GM12878 (cell line): ENCODE measurements at regions of chr4 and their contacts with region 1.

Region 1: DNA sequence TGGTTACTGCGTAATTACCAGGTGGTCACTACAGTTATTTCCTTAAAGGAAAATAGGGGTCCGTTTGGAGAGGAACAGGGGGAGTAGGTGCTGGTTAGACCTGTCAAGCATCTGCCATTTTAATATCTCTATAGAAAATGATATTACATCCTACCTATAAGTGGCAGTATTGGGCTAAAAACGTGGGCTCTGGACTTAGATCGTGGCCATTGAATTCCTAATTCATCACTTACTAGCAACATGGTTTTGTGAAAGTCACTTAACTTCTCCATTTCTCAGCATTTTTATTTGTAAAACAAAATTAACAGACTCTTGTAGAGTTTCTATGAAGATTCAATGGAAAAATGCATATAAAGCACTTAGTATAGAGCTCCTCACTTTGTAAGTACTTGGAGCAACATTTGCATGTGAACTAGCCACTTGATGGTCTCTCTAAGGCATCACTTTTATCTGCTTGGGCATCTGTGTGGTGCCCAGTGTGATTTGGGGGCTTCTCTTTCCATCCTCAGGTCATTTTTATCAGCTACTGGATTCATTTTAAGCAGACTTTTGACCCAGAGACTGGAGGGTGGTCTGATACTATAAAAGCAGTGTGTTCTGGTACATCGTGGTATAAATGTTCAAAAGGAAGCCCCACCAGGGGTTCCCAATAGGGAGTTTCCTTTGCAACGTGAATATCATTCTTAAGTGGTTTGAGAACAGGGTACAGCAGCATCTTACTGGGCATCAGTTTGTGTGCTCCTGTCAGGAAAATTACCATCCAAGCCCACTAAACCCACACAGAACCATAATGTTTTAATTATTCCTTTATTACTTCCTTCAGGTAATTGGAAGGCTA is 42.7 kb upstream of the RASSF6 start:
- DNase-seq: no peak
- ATAC-seq: peak; percentile 91
- H3K4me3 ChIP-seq: no peak overlapping the region
- H3K27ac ChIP-seq: no peak overlapping the region
- H3K4me1 ChIP-seq: no peaks in the 10 kb centered on the region
- H3K27me3 ChIP-seq: no peaks in the 10 kb centered on the region; a peak in 1 of 4 replicates
- CTCF ChIP-seq: peak; percentile 27 to 66 (median 48); a peak in 5 of 6 replicates
- EP300 ChIP-seq: no peak
- POLR2A ChIP-seq: no peak
- RAD21 ChIP-seq: peak; percentile 55

Region 2: DNA sequence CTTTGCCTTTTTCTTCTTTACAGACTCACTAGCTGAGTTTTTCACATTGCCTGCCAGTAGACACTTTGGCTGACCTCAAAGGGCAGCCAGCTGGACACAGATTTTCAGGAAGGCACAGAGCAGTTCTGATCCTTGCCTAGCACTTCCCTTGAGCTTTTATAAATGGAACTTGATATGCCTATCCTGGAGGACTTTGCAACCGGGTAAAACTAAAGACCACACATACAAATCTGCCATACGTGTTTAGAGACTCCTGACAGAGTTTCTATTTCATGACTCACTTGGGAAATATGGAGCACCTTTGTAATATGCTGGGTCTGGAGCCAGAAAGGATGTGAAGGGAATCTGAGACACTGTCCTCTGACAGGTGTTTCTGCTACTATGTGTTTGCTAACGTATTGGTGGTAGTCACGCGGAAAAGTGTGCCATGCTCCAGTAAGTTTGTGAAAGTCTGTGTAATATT is 14.0 kb after region 1 on chr4:
- CTCF ChIA-PET with region 1: interaction called, 43 read pairs
- POLR2A ChIA-PET with region 1: no interaction called
- RAD21 ChIA-PET with region 1: interaction called, 3 read pairs
- SMC1A ChIA-PET with region 1: interaction called, 9 read pairs
- in situ Hi-C with region 1: no loop called
- intact Hi-C with region 1: no loop called
- DNase-seq: peak; percentile 19
- ATAC-seq: peak; percentile 81
- H3K4me3 ChIP-seq: no peak overlapping the region
- H3K27ac ChIP-seq: no peak overlapping the region
- H3K4me1 ChIP-seq: no peaks in the 10 kb centered on the region
- H3K27me3 ChIP-seq: no peaks in the 10 kb centered on the region
- CTCF ChIP-seq: no peak
- EP300 ChIP-seq: no peak
- POLR2A ChIP-seq: no peak
- RAD21 ChIP-seq: no peak

Region 3: GRCh38 chr4:73864365-73864764 is 201.4 kb after region 1 on chr4:
- CTCF ChIA-PET with region 1: interaction called, 71 read pairs
- POLR2A ChIA-PET with region 1: no interaction called
- RAD21 ChIA-PET with region 1: interaction called, 17 read pairs
- SMC1A ChIA-PET with region 1: interaction called, 18 read pairs
- in situ Hi-C with region 1: no loop called
- intact Hi-C with region 1: loop called (anchors 1 kb)
- DNase-seq: no peak
- ATAC-seq: peak; percentile 62
- H3K4me3 ChIP-seq: no peak overlapping the region
- H3K27ac ChIP-seq: no peak overlapping the region
- H3K4me1 ChIP-seq: no peaks in the 10 kb centered on the region
- H3K27me3 ChIP-seq: peaks cover 0 to 6% of the 10 kb centered on the region in 2 experiments; a peak in 1 of 4 replicates
- CTCF ChIP-seq: peak; percentile 46 to 66 (median 57)
- EP300 ChIP-seq: no peak
- POLR2A ChIP-seq: no peak
- RAD21 ChIP-seq: peak; percentile 40; the same call in 1 of the 2 replicates

Region 4: DNA sequence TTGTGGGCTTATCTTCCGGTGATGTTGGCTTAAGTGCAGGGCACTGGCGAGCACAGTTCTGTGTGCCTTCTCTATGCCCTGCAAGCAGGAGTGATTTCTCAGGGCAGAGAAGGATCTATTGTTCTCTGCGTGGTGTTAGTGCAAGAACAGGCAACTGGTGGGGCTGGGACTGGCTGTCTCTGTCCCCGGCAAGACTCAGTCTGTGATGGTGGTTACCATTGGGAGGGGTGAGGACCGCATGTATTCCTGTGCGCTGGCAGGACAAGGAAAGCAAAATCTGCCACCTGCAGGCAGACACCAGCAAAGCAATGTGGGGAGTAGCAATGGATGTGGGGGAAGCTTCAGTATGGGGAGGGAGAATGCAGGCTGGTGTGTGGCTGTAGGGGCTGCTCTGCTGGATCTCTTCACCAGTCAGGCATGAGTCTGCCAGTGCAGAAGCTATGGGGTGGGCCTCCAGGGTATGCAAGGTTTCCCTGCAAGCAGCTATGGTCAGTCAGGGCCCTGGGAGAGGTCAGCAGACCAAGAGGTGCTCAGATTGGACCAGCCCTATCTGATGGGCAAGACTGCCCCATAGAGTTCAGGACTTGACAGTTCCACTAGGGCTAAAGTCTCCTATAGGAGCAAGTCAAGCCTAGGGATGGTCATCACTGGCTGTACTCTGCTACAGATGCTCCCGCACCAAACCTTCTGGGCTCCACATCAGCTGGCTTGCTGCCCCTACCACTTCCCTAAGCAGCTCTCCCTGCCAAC is 302.1 kb after region 1 on chr4:
- CTCF ChIA-PET with region 1: interaction called, 5 read pairs
- POLR2A ChIA-PET with region 1: no interaction called
- RAD21 ChIA-PET with region 1: no interaction called
- SMC1A ChIA-PET with region 1: interaction called, 4 read pairs
- in situ Hi-C with region 1: no loop called
- intact Hi-C with region 1: loop called (anchors 2 kb)
- DNase-seq: no peak
- ATAC-seq: peak; percentile 64
- H3K4me3 ChIP-seq: no peak overlapping the region
- H3K27ac ChIP-seq: no peak overlapping the region
- H3K4me1 ChIP-seq: no peaks in the 10 kb centered on the region
- H3K27me3 ChIP-seq: no peaks in the 10 kb centered on the region; a peak in 1 of 4 replicates
- CTCF ChIP-seq: peak in 2 of 3 experiments; percentile 23 to 31; a peak in 2 of 6 replicates
- EP300 ChIP-seq: no peak
- POLR2A ChIP-seq: no peak
- RAD21 ChIP-seq: no peak

Region 5: DNA sequence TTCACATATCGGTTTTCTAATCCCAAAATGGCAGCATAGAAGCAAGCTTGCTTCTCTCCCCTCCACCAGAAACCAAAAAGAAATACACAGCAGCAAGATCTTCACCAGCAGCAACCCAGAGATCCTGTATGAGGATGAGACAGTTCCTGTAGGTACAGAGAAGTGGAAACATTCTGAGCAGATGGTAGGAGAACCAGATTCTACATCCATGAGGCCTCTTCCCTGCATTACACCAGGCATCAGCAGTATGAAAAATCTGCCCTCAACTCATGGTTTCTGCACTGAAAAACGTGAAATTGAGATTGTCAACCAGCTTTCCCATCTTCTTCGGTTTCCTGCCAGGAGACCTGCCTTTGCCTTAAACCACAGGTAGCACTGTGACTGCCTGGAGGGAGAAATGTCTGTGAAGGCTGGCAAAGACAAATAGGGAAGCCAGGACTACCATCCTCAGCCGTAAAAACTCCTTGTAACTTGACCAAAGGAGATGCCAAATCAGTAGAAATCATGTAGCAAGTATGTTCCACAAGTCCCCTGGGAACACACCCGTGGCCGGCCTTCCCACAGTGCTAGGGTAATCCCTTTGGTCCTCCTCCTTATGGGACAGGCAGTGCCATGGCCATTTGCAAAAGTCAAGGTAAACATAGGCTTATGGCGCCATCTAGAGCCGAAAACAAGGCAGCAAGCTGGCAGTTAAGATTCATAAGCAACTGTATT is 471.0 kb after region 1 on chr4:
- CTCF ChIA-PET with region 1: interaction called, 113 read pairs
- POLR2A ChIA-PET with region 1: no interaction called
- RAD21 ChIA-PET with region 1: interaction called, 15 read pairs
- SMC1A ChIA-PET with region 1: interaction called, 32 read pairs
- in situ Hi-C with region 1: loop called (anchors 5 kb)
- intact Hi-C with region 1: loop called (anchors 1 kb)
- DNase-seq: peak; percentile 20
- ATAC-seq: peak; percentile 89
- H3K4me3 ChIP-seq: no peak overlapping the region
- H3K27ac ChIP-seq: no peak overlapping the region
- H3K4me1 ChIP-seq: no peaks in the 10 kb centered on the region
- H3K27me3 ChIP-seq: peaks cover 0 to 4% of the 10 kb centered on the region in 2 experiments; a peak in 1 of 4 replicates
- CTCF ChIP-seq: peak; percentile 69 to 86 (median 75)
- EP300 ChIP-seq: no peak
- POLR2A ChIP-seq: no peak
- RAD21 ChIP-seq: peak; percentile 86